Endothelial cell of umbilical vein (primary cell): ENCODE measurements at regions of chr10 and their contacts with region 1.

Region 1: GRCh38 chr10:4067931-4068561 is 283.0 kb upstream of the KLF6 start:
- DNase-seq: peak; percentile 75
- H3K4me3 ChIP-seq: no peak overlapping the region
- H3K27ac ChIP-seq: peak overlapping the region; percentile 70
- H3K4me1 ChIP-seq: peaks cover 34% of the 10 kb centered on the region
- H3K27me3 ChIP-seq: no peaks in the 10 kb centered on the region
- CTCF ChIP-seq: no peak
- POLR2A ChIP-seq: no peak

Region 2: GRCh38 chr10:3765146-3765545 is 302.9 kb before region 1 on chr10:
- CTCF ChIA-PET with region 1: no interaction called
- POLR2A ChIA-PET with region 1: no interaction called
- dilution Hi-C with region 1: no loop called
- intact Hi-C with region 1: no loop called
- DNase-seq: no peak
- H3K4me3 ChIP-seq: no peak overlapping the region
- H3K27ac ChIP-seq: no peak overlapping the region
- H3K4me1 ChIP-seq: no peaks in the 10 kb centered on the region
- H3K27me3 ChIP-seq: no peaks in the 10 kb centered on the region
- CTCF ChIP-seq: no peak
- POLR2A ChIP-seq: no peak

Region 3: GRCh38 chr10:4043897-4044665 is 24.0 kb before region 1 on chr10:
- CTCF ChIA-PET with region 1: no interaction called
- POLR2A ChIA-PET with region 1: no interaction called
- dilution Hi-C with region 1: no loop called
- intact Hi-C with region 1: loop called (anchors 1 kb)
- DNase-seq: peak; percentile 97
- H3K4me3 ChIP-seq: no peak overlapping the region
- H3K27ac ChIP-seq: peak overlapping the region; percentile 66
- H3K4me1 ChIP-seq: peaks cover 21% of the 10 kb centered on the region
- H3K27me3 ChIP-seq: no peaks in the 10 kb centered on the region
- CTCF ChIP-seq: no peak
- POLR2A ChIP-seq: peak; percentile 67

Region 4: GRCh38 chr10:4057725-4058513 is 10.1 kb before region 1 on chr10:
- CTCF ChIA-PET with region 1: no interaction called
- POLR2A ChIA-PET with region 1: no interaction called
- dilution Hi-C with region 1: no loop called
- intact Hi-C with region 1: no loop called
- DNase-seq: no peak
- H3K4me3 ChIP-seq: no peak overlapping the region
- H3K27ac ChIP-seq: no peak overlapping the region
- H3K4me1 ChIP-seq: peaks cover 11% of the 10 kb centered on the region
- H3K27me3 ChIP-seq: no peaks in the 10 kb centered on the region
- CTCF ChIP-seq: no peak
- POLR2A ChIP-seq: no peak

Region 5: DNA sequence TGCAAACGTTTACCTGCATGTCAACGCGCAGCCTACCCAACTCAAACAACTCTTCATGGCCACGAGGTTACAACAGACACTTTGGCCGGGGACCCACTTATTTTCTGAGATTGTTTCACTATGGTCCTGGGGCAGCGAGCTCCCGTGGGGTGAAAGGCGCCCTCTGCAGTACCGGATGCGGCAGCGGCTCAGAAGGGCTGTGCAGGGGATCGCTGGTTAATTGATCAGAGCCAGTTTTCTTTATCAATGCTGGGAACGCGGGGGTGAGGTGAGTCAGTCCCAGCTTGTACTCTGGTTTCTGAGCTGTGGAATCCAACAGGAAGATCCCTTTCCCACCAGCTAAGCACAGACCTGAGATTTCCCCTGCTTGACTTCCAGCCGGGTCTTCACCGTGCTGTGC is 83.4 kb after region 1 on chr10:
- CTCF ChIA-PET with region 1: no interaction called
- POLR2A ChIA-PET with region 1: no interaction called
- dilution Hi-C with region 1: no loop called
- intact Hi-C with region 1: no loop called
- DNase-seq: no peak
- H3K4me3 ChIP-seq: no peak overlapping the region
- H3K27ac ChIP-seq: no peak overlapping the region
- H3K4me1 ChIP-seq: no peaks in the 10 kb centered on the region
- H3K27me3 ChIP-seq: no peaks in the 10 kb centered on the region
- CTCF ChIP-seq: no peak
- POLR2A ChIP-seq: no peak

Region 6: GRCh38 chr10:4252701-4253100 is 184.7 kb after region 1 on chr10:
- CTCF ChIA-PET with region 1: no interaction called
- POLR2A ChIA-PET with region 1: no interaction called
- dilution Hi-C with region 1: no loop called
- intact Hi-C with region 1: no loop called
- DNase-seq: no peak
- H3K4me3 ChIP-seq: no peak overlapping the region
- H3K27ac ChIP-seq: no peak overlapping the region
- H3K4me1 ChIP-seq: no peaks in the 10 kb centered on the region
- H3K27me3 ChIP-seq: no peaks in the 10 kb centered on the region
- CTCF ChIP-seq: no peak
- POLR2A ChIP-seq: no peak